PC-3 (cell line): ENCODE measurements at regions of chr9 and their contacts with region 1.

Region 1: DNA sequence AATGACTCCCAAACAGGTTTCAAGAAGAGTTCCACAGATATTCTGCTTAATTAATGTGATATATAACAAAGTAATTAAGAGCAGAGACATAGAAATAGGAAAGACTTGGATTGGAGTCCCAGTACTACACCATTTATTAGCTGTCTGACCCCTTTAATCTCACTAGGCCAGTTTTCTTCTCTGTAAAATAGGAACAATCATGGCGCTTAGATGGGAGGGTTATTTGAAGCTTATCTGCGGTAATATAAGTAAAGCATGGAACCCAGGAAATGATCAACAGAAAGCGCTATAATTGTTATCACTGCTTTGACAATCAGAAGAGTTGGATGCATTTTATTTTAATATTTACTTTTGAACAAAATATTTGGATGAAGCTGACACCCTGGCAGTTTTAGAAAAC is 71.3 kb upstream of the IFNE start:
- DNase-seq: no peak
- ATAC-seq: no peak
- H3K4me3 ChIP-seq: peak overlapping the region; percentile 96
- H3K27ac ChIP-seq: peak overlapping the region; percentile 97
- H3K4me1 ChIP-seq: peaks cover 52% of the 10 kb centered on the region
- H3K27me3 ChIP-seq: no peaks in the 10 kb centered on the region
- CTCF ChIP-seq: no peak

Region 2: GRCh38 chr9:21428235-21428634 is 125.2 kb before region 1 on chr9:
- CTCF ChIA-PET with region 1: no interaction called
- POLR2A ChIA-PET with region 1: no interaction called
- intact Hi-C with region 1: no loop called
- DNase-seq: no peak
- ATAC-seq: no peak
- H3K4me3 ChIP-seq: no peak overlapping the region
- H3K27ac ChIP-seq: no peak overlapping the region
- H3K4me1 ChIP-seq: no peaks in the 10 kb centered on the region
- H3K27me3 ChIP-seq: no peaks in the 10 kb centered on the region
- CTCF ChIP-seq: no peak

Region 3: DNA sequence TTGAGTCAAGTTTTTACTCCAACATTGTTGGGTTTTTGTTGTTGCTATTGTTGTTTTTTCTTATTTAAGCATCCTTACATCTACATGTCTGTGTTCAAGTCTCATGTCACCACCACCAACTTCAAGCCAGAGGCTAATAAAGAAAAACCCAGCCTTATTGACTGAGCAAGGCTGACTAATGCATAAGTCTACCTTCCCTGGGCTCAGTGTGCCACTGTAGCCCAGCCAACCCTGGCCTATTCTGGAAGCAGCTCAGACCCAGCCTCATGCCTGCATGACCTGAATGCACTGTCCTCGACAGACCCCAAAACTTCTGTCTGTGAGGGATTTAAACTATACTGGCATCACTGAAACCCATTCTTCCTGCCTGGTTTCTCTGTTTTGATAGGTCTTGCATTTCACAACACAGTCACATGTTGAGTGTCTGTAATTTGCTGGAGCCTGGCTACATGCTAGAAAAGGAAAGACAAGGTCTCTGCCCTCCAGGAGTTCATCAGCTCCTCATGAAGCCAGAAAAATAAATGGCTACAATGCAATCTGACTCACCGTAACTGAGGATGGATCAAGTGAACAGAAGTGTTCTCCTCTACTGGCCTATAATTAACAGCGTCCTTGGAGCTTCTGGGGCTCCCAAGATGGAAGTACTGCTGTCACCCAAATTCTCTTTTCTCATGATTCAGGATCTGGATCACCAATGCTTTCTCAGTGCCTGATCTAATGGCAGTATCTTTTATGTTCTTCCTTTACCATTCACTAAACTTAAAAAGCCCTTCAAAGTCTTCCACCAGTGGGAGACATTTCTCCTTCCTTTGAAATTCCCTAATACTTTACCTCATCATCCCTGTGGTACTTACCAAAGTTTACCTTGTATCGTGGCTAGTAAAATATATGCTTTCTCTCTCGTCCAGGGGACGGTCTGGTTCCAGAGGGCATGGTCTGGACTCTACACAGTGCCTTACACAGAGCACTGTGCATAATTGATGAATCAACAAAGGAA is 32.6 kb after region 1 on chr9:
- CTCF ChIA-PET with region 1: no interaction called
- POLR2A ChIA-PET with region 1: no interaction called
- intact Hi-C with region 1: no loop called
- DNase-seq: peak; percentile 39
- ATAC-seq: peak; percentile 31
- H3K4me3 ChIP-seq: no peak overlapping the region
- H3K27ac ChIP-seq: peak overlapping the region; percentile 39
- H3K4me1 ChIP-seq: peaks cover 46% of the 10 kb centered on the region
- H3K27me3 ChIP-seq: no peaks in the 10 kb centered on the region
- CTCF ChIP-seq: peak; percentile 53

Region 4: GRCh38 chr9:21682981-21683380 is 129.5 kb after region 1 on chr9:
- CTCF ChIA-PET with region 1: no interaction called
- POLR2A ChIA-PET with region 1: interaction called, 11 read pairs
- intact Hi-C with region 1: no loop called
- DNase-seq: peak; percentile 60
- ATAC-seq: no peak; the same call in 1 of the 2 replicates
- H3K4me3 ChIP-seq: no peak overlapping the region
- H3K27ac ChIP-seq: peak overlapping the region; percentile 96
- H3K4me1 ChIP-seq: peaks cover 89% of the 10 kb centered on the region
- H3K27me3 ChIP-seq: no peaks in the 10 kb centered on the region
- CTCF ChIP-seq: no peak

Region 5: GRCh38 chr9:21750021-21750735 is 196.7 kb after region 1 on chr9:
- CTCF ChIA-PET with region 1: no interaction called
- POLR2A ChIA-PET with region 1: no interaction called
- intact Hi-C with region 1: no loop called
- DNase-seq: no peak
- ATAC-seq: no peak
- H3K4me3 ChIP-seq: no peak overlapping the region
- H3K27ac ChIP-seq: no peak overlapping the region
- H3K4me1 ChIP-seq: peaks cover 31% of the 10 kb centered on the region
- H3K27me3 ChIP-seq: no peaks in the 10 kb centered on the region
- CTCF ChIP-seq: no peak

Region 6: DNA sequence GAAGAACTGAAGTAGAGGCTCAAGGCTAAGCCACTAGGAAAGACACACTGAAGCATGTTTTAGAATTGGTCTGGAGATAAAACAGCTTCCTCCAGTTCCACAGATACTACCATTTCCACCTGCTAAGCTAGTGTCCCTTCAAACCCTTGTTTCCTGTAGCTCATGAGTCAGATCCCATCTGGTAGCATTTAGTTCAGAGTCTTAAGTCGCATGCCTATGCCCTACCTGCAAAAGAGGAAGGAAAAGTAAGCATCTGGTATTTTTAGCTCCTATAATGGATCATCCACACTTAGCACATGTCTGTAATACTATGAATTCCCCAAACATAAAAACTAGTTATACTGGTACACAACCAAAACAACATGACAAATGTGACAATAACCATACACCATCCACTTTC is 348.7 kb after region 1 on chr9:
- CTCF ChIA-PET with region 1: no interaction called
- POLR2A ChIA-PET with region 1: no interaction called
- intact Hi-C with region 1: no loop called
- DNase-seq: peak; percentile 6
- ATAC-seq: peak; percentile 33; the same call in 1 of the 2 replicates
- H3K4me3 ChIP-seq: no peak overlapping the region
- H3K27ac ChIP-seq: no peak overlapping the region
- H3K4me1 ChIP-seq: no peaks in the 10 kb centered on the region
- H3K27me3 ChIP-seq: no peaks in the 10 kb centered on the region
- CTCF ChIP-seq: no peak